HepG2 (cell line): ENCODE measurements at regions of chr10 and their contacts with region 1.

Region 1: GRCh38 chr10:24209946-24210491 is 1.1 kb downstream of the KIAA1217 start:
- DNase-seq: peak; percentile 38
- ATAC-seq: peak; percentile 5; the same call in 2 of the 3 replicates
- H3K4me3 ChIP-seq: peak overlapping the region; percentile 70 to 88 (median 80)
- H3K27ac ChIP-seq: peak overlapping the region; percentile 90
- H3K4me1 ChIP-seq: peaks cover 64% of the 10 kb centered on the region
- H3K27me3 ChIP-seq: no peaks in the 10 kb centered on the region
- CTCF ChIP-seq: no peak
- EP300 ChIP-seq: no peak
- POLR2A ChIP-seq: peak in 1 of 2 experiments; percentile 33; a peak in 2 of 4 replicates
- RAD21 ChIP-seq: no peak

Region 2: GRCh38 chr10:24318517-24318916 is 108.5 kb after region 1 on chr10:
- CTCF ChIA-PET with region 1: no interaction called
- POLR2A ChIA-PET with region 1: no interaction called
- in situ Hi-C with region 1: no loop called
- intact Hi-C with region 1: loop called (anchors 5 kb)
- DNase-seq: peak; percentile 76
- ATAC-seq: peak; percentile 78
- H3K4me3 ChIP-seq: no peak overlapping the region
- H3K27ac ChIP-seq: peak overlapping the region; percentile 0
- H3K4me1 ChIP-seq: peaks cover 25% of the 10 kb centered on the region
- H3K27me3 ChIP-seq: no peaks in the 10 kb centered on the region
- CTCF ChIP-seq: no peak
- EP300 ChIP-seq: no peak
- POLR2A ChIP-seq: no peak
- RAD21 ChIP-seq: no peak